Transverse colon (tissue), 4 donors: ENCODE measurements at regions of chr18 and their contacts with region 1.

Region 1: GRCh38 chr18:64695851-64696553 is 547.1 kb upstream of the LINC00305 start:
- DNase-seq: no peak
- H3K4me3 ChIP-seq: no peak overlapping the region
- H3K27ac ChIP-seq: no peak overlapping the region
- H3K4me1 ChIP-seq: no peaks in the 10 kb centered on the region
- H3K27me3 ChIP-seq: no peaks in the 10 kb centered on the region
- CTCF ChIP-seq: no peak
- EP300 ChIP-seq: no peak
- POLR2A ChIP-seq: no peak

Region 2: DNA sequence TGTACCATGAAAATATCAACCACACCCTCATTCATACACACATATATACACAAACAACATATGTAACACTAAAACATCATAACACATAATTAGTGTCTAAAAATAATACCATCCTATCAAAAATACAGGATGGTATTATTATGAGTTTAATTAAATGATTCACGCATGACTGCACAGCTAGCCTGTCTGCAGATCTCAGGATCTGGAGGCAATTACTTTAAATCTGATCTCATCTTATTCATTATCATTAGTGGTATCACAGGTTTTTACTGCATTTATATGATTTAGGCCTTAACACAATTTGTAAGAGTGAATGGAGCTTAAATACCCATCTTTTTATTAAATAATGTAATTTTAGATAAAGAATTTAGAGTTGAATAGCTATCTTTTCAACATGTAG is 103.8 kb before region 1 on chr18:
- in situ Hi-C with region 1: loop called in 1 of 4 experiments (anchors 25 kb)
- intact Hi-C with region 1: no loop called
- DNase-seq: no peak
- H3K4me3 ChIP-seq: no peak overlapping the region
- H3K27ac ChIP-seq: no peak overlapping the region
- H3K4me1 ChIP-seq: no peaks in the 10 kb centered on the region
- H3K27me3 ChIP-seq: no peaks in the 10 kb centered on the region
- CTCF ChIP-seq: no peak
- EP300 ChIP-seq: no peak
- POLR2A ChIP-seq: no peak